Aorta (tissue), 5 donors: ENCODE measurements at regions of chrX and their contacts with region 1.

Region 1: DNA sequence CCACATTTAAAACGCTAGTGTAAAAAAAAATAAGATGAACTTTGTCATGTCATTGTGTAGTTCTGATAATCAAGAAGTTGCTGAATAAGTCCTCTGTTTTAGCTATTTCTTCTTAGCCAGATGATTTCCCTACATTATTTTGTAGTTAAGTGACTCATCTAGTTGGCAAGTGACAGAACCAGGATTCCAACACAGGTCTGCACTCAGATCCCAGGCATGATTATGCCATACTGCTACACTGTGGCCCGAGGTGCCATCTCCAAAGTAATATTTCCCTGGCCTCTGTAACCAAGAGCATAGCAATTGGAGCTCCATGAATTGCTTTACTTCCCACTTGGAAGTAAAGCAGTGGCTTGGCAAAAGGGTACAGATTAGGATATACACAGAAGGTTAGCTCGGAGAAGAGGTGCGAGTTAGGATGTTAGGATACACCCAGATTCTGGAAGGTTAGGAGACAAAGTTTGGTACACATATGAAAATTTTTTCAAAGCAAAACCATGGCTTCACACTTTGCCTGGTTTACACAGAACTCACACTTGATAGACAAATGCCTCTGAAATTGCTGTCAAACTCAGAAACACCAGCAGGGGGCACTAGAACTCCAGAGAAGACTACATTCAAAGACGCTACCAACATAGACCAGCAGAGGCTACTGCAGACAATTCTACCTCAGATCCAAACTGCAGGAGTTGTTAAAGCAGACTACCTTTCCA is 41.4 kb downstream of the SRPX2 start:
- DNase-seq: peak in 1 of 2 donors; percentile 54
- ATAC-seq: peak; percentile 89
- H3K4me3 ChIP-seq: no peak overlapping the region
- H3K27ac ChIP-seq: no peak overlapping the region
- H3K4me1 ChIP-seq: no peaks in the 10 kb centered on the region
- H3K27me3 ChIP-seq: no peaks in the 10 kb centered on the region

Region 2: DNA sequence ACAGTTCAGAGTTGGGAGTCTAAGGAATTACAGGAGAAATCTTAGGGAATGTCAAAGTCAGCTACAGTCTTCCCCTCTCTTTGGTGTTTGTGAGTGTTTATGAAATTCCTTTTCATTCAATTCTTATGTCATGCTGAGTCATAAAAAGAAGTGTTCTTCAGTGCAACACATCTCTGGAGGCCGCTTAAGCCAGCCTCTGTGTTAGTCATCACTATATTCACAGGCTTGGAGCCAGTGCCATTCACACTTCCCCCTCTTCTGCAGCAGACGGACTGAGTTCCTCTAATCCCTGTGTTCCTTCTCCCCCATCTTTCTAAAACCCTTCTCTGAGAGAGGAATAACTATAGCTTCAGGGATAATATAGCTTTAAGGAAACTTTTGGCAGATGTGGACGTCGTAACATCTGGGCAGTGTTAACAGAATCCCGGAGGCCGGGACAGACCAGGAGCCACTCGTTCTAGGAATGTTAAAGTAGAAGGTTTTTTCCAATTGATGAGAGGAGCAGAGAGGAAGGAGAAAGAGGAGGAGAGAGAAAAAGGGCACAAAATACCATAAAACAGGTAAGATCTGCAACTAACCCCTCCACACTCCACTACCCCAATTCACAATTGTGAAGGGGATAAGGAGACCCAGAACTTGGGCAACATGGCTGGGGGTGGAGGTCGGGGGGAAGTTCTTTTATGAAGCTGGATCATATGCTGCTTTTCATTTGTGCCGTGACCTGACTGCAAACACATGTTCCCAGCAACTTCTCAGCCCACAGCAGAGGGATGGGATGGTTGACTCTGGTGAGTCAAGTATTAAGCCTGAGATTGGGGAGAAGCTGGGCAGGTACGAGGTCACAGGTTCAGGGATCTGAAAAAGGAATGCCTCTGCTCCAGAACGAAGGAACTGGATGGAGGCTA is 41.2 kb before region 1 on chrX and contains the start of gene SRPX2:
- intact Hi-C with region 1: no loop called
- DNase-seq: peak in 1 of 2 donors; percentile 69
- ATAC-seq: peak; percentile 88
- H3K4me3 ChIP-seq: peak within 1 kb of the TSS in 1 of 2 donors; percentile 48
- H3K27ac ChIP-seq: peak within 1 kb of the TSS in 1 of 2 donors; percentile 75
- H3K4me1 ChIP-seq: no peaks in the 10 kb centered on the region
- H3K27me3 ChIP-seq: no peaks in the 10 kb centered on the region
- total RNA-seq, gene SRPX2: 36.8 to 48.2 TPM

Region 3: GRCh38 chrX:100768679-100769338 is 83.4 kb after region 1 on chrX:
- intact Hi-C with region 1: loop called (anchors 1 to 5 kb)
- DNase-seq: peak; percentile 85 to 91
- ATAC-seq: peak; percentile 91
- H3K4me3 ChIP-seq: no peak overlapping the region
- H3K27ac ChIP-seq: no peak overlapping the region
- H3K4me1 ChIP-seq: no peaks in the 10 kb centered on the region
- H3K27me3 ChIP-seq: no peaks in the 10 kb centered on the region

Region 4: DNA sequence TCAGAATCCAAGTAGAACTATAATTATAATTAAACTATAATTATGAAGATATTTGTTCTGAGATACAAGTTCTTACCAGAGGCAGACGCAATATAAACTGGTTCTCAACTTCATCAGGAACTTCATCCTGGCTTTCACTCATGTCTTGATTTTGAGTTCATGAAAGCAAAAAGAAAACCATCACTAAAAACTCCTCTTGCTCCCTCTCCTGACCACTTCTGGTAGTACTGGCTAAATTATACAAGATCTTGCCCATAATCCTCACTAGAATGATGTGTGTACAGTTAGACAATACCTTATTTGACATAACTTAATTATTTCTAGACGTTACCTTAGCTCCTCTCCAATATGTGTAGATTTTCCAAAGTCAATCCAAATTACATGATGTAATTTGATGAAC is 602.0 kb after region 1 on chrX:
- intact Hi-C with region 1: loop called in 1 of 2 experiments (anchors 10 kb)
- DNase-seq: no peak
- ATAC-seq: no peak
- H3K4me3 ChIP-seq: no peak overlapping the region
- H3K27ac ChIP-seq: no peak overlapping the region
- H3K4me1 ChIP-seq: no peaks in the 10 kb centered on the region
- H3K27me3 ChIP-seq: no peaks in the 10 kb centered on the region